ENCODE measurements at regions of chr2 and their contacts with region 1.

Region 1: DNA sequence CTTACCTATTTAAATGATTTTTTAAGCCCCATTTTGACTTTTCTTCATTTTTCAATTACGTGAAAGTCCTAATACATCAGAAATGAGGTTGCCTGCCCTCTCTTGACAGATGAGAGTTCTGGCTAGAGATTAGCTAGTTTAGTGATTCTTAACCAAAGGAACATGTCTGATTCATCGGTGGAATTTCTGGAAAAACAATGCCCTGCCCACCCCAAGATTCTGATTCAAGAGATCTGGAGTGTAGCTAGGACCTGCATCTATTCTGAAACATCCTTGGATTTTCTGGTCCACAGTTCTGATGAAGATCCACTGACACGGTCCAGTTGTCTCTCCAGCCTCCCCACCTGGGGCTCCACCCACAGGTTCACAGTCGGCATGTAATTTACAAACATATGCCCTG is 111.2 kb downstream of the KLF7 start:
- DNase-seq: no peak
- ATAC-seq: no peak
- H3K4me3 ChIP-seq: no peak overlapping the region
- H3K4me3 Mint-ChIP-seq: no peak overlapping the region
- H3K27ac ChIP-seq: no peak overlapping the region
- H3K27ac Mint-ChIP-seq: no peak overlapping the region
- H3K4me1 ChIP-seq: no peaks in the 10 kb centered on the region
- H3K4me1 Mint-ChIP-seq: peaks cover 0 to 5% (median 0%) of the 10 kb centered on the region in 7 donors
- H3K27me3 ChIP-seq: no peaks in the 10 kb centered on the region
- H3K27me3 Mint-ChIP-seq: peaks cover 0 to 30% (median 0%) of the 10 kb centered on the region in 5 donors

Region 2: DNA sequence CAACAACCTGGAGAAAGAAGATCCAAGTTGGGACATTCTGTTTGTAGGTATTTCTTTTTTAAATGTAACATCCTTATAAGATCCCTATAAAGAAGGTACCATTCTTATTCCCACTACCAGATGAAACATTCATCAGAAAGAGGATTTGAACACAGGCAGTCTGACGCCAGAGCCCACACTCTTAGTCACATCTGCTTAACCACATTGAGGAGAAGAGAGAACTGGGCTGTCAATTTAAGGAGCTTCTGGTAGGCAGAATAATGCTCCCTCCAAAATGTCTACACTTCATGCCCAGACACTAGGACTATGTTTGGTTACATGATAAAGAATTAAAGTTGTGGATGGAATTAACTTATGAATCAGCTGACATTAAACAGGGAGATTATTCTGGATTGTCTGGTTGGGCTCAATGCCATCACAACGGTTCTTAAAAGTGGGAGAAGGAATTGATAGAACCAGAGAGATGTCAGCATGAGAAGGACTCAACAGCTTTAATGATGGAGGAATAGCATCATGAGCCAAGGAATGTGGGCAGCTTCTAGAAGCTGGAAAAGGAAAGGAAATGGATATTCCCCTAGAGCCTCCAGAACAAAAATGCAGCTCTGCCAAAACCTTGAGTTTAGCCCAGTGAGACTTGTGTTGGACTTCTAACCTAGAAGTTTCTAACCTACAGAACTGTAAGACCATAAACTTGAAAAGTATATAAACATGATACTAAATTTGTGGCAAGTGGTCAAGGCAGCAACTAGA is 29.0 kb after region 1 on chr2:
- CTCF ChIA-PET with region 1: no interaction called
- POLR2A ChIA-PET with region 1: no interaction called
- intact Hi-C with region 1: loop called in 1 of 2 experiments (anchors 1 kb)
- DNase-seq: no peak
- ATAC-seq: no peak
- H3K4me3 ChIP-seq: no peak overlapping the region
- H3K4me3 Mint-ChIP-seq: no peak overlapping the region
- H3K27ac ChIP-seq: no peak overlapping the region
- H3K27ac Mint-ChIP-seq: peak overlapping the region in 4 of 9 donors; percentile 23 to 93 (median 48)
- H3K4me1 ChIP-seq: peaks cover 0 to 6% of the 10 kb centered on the region in 2 donors
- H3K4me1 Mint-ChIP-seq: peaks cover 5 to 15% (median 10%) of the 10 kb centered on the region in 7 donors
- H3K27me3 ChIP-seq: no peaks in the 10 kb centered on the region
- H3K27me3 Mint-ChIP-seq: no peaks in the 10 kb centered on the region

Region 3: DNA sequence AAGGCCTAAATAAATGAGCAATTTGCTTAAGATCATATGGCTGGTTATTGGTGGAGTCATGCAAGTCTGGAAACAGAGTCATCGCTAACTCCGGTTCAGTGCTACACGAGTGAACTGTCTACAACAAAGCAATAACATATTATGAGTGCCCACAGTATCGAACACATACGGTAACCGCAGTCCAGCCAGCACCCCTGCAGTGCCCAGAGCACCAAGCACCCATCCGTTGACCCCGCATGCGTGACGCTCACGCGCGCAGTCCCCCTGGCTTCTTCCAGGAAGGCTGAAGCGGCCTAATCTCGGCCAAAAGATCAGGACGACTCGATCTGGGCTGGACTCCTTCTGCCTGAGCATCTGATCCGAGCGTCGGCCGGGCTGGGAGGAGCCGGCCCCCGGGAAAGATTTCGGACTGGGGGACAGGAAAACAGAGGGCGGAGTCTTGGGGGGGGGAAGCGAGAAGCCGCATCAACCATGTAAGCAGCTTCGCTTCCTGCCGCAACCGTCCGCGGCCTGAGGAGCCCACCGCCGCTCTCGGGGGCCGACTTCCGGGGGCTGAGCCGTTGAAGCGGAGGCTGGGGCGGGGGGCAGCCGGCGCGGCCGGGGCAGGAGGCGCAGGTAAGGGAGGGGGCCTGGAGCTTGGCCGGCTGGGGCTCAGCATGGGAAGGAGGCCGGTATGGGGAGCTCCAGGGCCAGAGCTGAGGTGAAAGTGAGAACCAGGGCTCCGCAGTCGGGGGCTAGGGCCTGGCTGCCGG is 1211.5 kb after region 1 on chr2 and contains the start of gene PIKFYVE:
- CTCF ChIA-PET with region 1: no interaction called
- POLR2A ChIA-PET with region 1: no interaction called
- intact Hi-C with region 1: no loop called
- DNase-seq: peak; percentile 63 to 87 (median 83)
- ATAC-seq: peak; percentile 94
- H3K4me3 ChIP-seq: peak within 1 kb of the TSS; percentile 97
- H3K4me3 Mint-ChIP-seq: peak within 1 kb of the TSS; percentile 90 to 99 (median 96)
- H3K27ac ChIP-seq: peak within 1 kb of the TSS; percentile 83
- H3K27ac Mint-ChIP-seq: peak within 1 kb of the TSS; percentile 87 to 98 (median 95)
- H3K4me1 ChIP-seq: peaks cover 12 to 16% of the 10 kb centered on the region in 2 donors
- H3K4me1 Mint-ChIP-seq: peaks cover 9 to 60% (median 53%) of the 10 kb centered on the region in 7 donors
- H3K27me3 ChIP-seq: no peaks in the 10 kb centered on the region
- H3K27me3 Mint-ChIP-seq: peaks cover 0 to 5% (median 0%) of the 10 kb centered on the region in 5 donors
- total RNA-seq, gene PIKFYVE: 33.4 to 52.3 (median 39.1) TPM

Measured in naive thymus-derived CD4-positive, alpha-beta T cell (primary cell).